ENCODE measurements at regions of chr10 and their contacts with region 1.

Region 1: DNA sequence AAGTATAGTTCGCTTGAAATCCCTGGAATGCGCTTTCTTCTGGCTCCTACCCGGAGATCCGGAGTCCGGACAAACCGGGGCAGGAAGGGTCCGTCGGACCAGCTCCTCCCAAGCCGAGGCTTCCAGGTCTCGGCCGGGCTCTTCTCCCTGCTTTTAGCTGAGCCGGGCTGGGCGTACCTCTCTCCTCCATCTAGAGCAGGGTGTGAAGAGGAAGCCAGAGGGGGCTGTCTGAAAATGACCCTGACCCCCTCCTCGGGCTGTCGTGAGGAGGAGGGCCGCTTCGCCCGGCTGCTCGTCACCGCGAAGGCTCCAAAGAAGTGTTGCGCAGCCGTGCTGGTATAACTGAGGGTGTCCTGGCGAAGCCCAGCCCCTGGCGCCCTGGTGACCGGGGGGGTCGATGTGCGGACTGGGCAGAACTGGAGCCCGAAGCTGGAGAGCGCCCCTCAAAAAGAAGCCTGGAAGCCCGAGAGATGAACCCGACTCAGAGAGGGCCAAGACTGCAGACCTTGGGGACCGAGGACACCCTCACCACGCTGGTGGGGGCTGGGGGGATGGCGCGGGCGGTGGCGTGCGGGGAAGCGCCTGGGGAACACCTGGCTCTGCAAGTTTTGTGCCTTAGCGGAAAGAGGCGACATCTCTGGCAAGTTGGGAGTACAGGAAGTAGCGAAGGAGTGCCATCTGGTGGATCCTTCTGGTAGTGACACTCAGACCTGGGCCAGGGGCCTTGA is 5.7 kb downstream of the KAZALD1 start:
- DNase-seq: peak; percentile 41 to 65
- ATAC-seq: peak; percentile 79 to 80
- H3K4me3 ChIP-seq: peak overlapping the region; percentile 44 to 67 (median 57)
- H3K27ac ChIP-seq: peak overlapping the region in 3 of 4 donors; percentile 67 to 77 (median 69)
- H3K4me1 ChIP-seq: peaks cover 38 to 39% of the 10 kb centered on the region in 2 donors
- H3K27me3 ChIP-seq: peaks cover 14 to 23% (median 21%) of the 10 kb centered on the region in 3 donors
- CTCF ChIP-seq: peak; percentile 71 to 96 (median 91)
- POLR2A ChIP-seq: no peak

Region 2: GRCh38 chr10:101018600-101019439 is 48.7 kb before region 1 on chr10:
- in situ Hi-C with region 1: no loop called
- intact Hi-C with region 1: no loop called
- DNase-seq: peak in 1 of 2 donors; percentile 56
- ATAC-seq: no peak
- H3K4me3 ChIP-seq: no peak overlapping the region
- H3K27ac ChIP-seq: peak overlapping the region in 3 of 4 donors; percentile 4 to 55 (median 39)
- H3K4me1 ChIP-seq: no peaks in the 10 kb centered on the region
- H3K27me3 ChIP-seq: no peaks in the 10 kb centered on the region
- CTCF ChIP-seq: peak; percentile 18 to 66 (median 55)
- POLR2A ChIP-seq: no peak

Region 3: DNA sequence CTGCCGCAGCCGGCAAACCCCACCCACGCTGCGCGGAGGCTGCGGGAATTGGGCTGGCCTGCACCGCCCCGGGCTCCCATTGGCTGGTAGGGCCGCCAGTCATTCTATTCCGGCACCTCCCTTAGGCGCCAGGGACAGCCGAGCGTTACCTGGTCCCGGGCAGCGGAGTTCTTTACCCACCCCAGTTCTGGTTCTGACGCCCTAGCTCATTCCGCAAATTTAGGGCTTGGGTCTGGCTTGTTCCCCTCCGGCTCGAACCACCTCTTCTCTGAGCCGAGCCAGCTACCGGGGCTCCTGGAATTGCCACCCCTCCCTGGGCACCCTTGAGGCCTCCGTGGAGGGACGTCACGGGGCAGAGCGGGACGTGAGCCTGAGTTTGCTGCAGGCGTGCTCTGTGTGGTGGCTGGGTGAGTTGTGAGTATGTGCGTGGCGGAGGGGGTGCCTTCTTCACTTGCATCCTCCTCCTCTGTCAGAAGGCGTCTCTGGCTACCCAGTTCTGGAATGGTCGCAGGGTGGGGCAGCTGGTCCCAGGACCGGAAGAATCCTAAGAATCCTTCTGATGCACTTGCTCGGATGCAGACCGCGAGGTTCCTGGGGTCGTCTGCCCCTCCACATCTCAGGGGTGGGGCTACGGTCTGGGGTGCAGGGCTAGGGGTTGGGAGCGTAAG is 36.3 kb before region 1 on chr10 and contains the starts of genes PDZD7 and SFXN3:
- in situ Hi-C with region 1: no loop called
- intact Hi-C with region 1: loop called (anchors 5 kb)
- DNase-seq: peak; percentile 93 to 94
- ATAC-seq: peak; percentile 86 to 91
- H3K4me3 ChIP-seq: peak within 1 kb of the TSS; percentile 52 to 92 (median 81)
- H3K27ac ChIP-seq: peak within 1 kb of the TSS; percentile 84 to 91 (median 88)
- H3K4me1 ChIP-seq: peaks cover 7 to 16% of the 10 kb centered on the region in 2 donors
- H3K27me3 ChIP-seq: no peaks in the 10 kb centered on the region
- CTCF ChIP-seq: no peak
- POLR2A ChIP-seq: peak; percentile 48 to 66
- total RNA-seq, gene PDZD7: 0.11 TPM in 1 of 4 donors, not detected in the others
- total RNA-seq, gene SFXN3: 4.2 to 9.5 (median 7.0) TPM

Region 4: DNA sequence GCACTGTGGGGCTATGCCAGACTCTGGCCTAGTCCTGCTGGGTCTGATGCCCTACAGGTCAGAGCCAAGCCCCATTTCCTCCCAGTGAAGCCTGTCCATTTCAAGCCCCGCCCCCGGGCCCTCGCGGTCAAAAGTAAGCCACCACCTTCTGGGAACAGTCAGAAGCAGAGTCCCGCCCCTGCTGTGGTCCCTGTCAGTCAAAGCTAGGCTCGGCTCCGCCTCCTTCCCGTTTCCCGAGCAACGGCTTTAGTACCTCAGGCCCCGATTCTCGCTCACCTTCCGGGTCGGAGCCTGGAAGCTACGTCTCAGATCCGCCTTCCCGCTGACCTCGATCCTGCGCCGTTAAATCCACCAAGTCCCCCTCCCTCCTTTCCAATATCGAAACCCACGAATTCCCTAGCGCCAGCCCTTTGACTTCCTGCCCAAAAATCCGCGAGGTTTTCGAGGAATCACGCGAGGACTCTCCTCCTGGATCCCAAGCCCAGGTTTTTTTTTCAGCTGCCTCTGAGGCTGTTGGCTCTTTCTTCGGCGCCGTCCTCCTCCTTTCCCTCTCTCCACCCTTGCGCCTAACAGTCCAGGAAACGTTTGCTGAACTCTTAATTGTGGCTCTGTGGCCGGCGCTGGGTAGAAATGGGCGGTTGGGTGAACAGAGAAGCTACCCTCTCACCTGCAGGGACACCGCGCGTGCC is 24.7 kb before region 1 on chr10:
- in situ Hi-C with region 1: no loop called
- intact Hi-C with region 1: loop called (anchors 1 kb)
- DNase-seq: peak; percentile 89 to 94
- ATAC-seq: peak; percentile 88 to 91
- H3K4me3 ChIP-seq: peak overlapping the region; percentile 61 to 75 (median 64)
- H3K27ac ChIP-seq: peak overlapping the region; percentile 74 to 84 (median 79)
- H3K4me1 ChIP-seq: peaks cover 11 to 16% of the 10 kb centered on the region in 2 donors
- H3K27me3 ChIP-seq: peaks cover 7 to 12% (median 9%) of the 10 kb centered on the region in 3 donors
- CTCF ChIP-seq: no peak
- POLR2A ChIP-seq: peak; percentile 46 to 59